MCF 10A (cell line): ENCODE measurements at regions of chr10 and their contacts with region 1.

Region 1: GRCh38 chr10:92240289-92241157 is 50.4 kb downstream of the CPEB3 start:
- DNase-seq: peak; percentile 75
- H3K4me3 Mint-ChIP-seq: peak overlapping the region; percentile 76
- H3K27ac Mint-ChIP-seq: peak overlapping the region; percentile 14
- H3K4me1 Mint-ChIP-seq: peaks cover 35% of the 10 kb centered on the region
- H3K27me3 Mint-ChIP-seq: no peaks in the 10 kb centered on the region
- CTCF ChIP-seq: no peak

Region 2: DNA sequence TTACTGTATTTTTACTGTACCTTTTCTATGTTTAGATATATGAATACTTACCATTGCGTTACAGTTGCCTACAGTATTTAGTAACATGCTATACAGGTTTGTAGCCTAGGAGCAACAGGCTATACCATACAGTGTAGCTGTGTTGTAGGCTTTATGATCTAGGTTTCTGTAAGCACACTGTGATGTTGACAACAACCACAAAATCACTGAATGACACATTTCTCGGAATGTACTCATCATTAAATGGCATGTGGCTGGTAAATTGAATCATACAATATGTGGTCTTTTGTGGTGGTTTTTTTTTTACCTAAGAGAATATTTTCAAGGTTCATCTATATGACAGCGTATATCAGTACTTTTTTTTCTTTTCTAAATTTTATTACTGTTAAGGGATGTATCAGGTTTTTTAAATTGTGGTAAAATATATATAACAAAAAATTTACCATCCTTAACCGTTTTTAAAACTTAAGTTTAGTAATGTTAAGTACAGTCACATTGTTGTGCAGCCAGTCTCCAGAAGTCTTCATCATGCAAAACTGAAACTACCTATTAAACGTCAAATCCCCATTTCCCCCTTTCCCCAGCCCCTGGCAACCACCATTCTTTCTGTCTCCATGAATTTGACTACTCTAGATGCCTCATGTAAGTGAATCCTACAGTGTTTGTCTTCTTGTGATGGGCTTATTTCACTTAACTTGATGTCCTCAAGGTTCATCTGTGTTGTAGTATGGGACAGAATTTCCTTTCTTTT is 295.5 kb before region 1 on chr10:
- CTCF ChIA-PET with region 1: no interaction called
- POLR2A ChIA-PET with region 1: no interaction called
- intact Hi-C with region 1: no loop called
- DNase-seq: peak; percentile 11
- H3K4me3 Mint-ChIP-seq: no peak overlapping the region
- H3K27ac Mint-ChIP-seq: no peak overlapping the region
- H3K4me1 Mint-ChIP-seq: no peaks in the 10 kb centered on the region
- H3K27me3 Mint-ChIP-seq: no peaks in the 10 kb centered on the region
- CTCF ChIP-seq: no peak

Region 3: DNA sequence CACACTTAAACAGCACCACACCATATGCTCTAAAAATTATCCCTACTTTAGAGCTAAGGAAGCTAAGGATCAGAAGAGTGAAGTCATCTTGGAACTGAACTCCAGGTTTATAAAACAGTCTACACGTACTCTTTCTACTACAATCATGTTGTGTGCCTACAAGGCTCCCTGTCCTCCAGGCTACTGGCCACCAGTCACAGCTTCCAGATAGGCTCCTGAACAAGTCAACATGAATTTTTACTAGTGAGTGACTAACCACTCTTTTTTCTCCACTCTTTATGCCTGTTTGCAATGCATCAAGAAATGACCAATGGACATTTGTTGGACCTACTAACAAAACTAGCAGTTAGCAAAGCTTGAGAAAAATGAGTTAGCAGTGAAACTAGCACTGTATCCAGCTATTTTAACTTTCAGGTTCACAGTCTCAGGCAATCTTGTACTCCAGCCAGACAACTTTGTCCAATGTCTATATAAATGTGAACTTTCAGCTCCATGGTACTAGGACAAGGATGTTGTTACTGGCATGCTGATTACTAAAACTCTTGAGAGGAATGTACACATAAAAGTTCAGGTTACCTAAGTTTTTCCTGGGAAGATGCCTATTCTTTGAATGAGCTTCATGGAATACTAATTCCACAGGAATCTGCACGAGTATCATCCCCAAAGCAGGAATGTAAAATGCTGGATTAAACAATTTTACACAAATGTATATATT is 137.0 kb before region 1 on chr10:
- CTCF ChIA-PET with region 1: no interaction called
- POLR2A ChIA-PET with region 1: interaction called, 15 read pairs
- intact Hi-C with region 1: loop called (anchors 5 kb)
- DNase-seq: no peak
- H3K4me3 Mint-ChIP-seq: no peak overlapping the region
- H3K27ac Mint-ChIP-seq: no peak overlapping the region
- H3K4me1 Mint-ChIP-seq: peaks cover 15% of the 10 kb centered on the region
- H3K27me3 Mint-ChIP-seq: no peaks in the 10 kb centered on the region
- CTCF ChIP-seq: no peak

Region 4: DNA sequence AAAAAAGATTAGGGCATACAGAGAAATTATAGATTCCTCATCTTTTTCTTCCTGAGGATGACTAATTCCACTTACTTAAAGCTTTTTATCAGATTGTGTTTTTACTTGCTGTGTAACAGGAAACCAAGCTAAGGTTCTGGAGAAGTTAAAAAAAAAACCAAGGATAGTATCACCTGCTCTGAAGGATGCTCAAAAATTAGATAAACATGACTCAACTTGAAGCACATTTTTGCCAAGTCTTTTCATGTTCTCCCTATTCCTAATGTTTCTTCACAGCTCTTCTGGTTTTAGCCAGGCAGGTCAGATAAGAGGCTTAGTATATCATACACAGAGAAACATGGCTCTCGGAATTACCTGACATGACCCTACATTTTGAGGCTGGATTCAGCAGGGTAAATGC is 40.0 kb before region 1 on chr10:
- CTCF ChIA-PET with region 1: no interaction called
- POLR2A ChIA-PET with region 1: interaction called, 10 read pairs
- intact Hi-C with region 1: no loop called
- DNase-seq: peak; percentile 37
- H3K4me3 Mint-ChIP-seq: no peak overlapping the region
- H3K27ac Mint-ChIP-seq: no peak overlapping the region
- H3K4me1 Mint-ChIP-seq: peaks cover 4% of the 10 kb centered on the region
- H3K27me3 Mint-ChIP-seq: no peaks in the 10 kb centered on the region
- CTCF ChIP-seq: no peak

Region 5: DNA sequence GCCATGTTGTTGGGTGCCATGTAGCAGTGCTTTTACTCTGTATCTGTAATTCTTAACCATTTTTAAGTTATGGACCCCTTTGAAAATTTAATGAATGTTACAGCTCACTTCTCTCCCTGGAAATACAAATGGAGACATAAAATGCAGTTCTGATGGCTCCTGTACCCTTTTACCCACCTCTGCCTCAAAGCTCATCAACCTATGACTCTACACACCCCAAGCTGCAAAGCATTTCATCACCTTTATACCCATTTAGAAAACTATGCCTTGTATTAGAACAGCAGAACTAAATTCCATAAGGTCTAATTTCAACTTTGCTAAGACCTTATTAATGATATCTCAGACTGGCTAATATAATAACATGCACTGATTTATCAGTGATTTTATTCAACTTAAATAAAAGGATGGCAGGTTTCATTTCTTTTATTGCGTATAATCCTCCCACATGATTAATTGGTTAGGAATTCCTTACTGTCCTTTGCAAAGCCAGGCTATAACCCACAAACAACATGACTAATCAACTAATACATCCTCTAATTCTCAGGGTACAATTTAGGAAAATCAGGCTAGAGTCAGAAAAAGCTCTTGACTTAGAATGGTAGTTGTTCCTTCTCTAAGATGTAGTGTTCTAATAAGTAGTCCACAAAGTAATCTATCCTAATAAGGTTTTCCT is 17.8 kb before region 1 on chr10:
- CTCF ChIA-PET with region 1: interaction called, 9 read pairs
- POLR2A ChIA-PET with region 1: interaction called, 60 read pairs
- intact Hi-C with region 1: no loop called
- DNase-seq: peak; percentile 68
- H3K4me3 Mint-ChIP-seq: peak overlapping the region; percentile 21
- H3K27ac Mint-ChIP-seq: peak overlapping the region; percentile 1
- H3K4me1 Mint-ChIP-seq: peaks cover 20% of the 10 kb centered on the region
- H3K27me3 Mint-ChIP-seq: no peaks in the 10 kb centered on the region
- CTCF ChIP-seq: no peak